Keratinocyte (primary cell): ENCODE measurements at regions of chr12 and their contacts with region 1.

Region 1: GRCh38 chr12:121472150-121472905 is 72.4 kb downstream of the RNF34 start:
- DNase-seq: no peak
- H3K4me3 ChIP-seq: no peak overlapping the region
- H3K27ac ChIP-seq: no peak overlapping the region
- H3K4me1 ChIP-seq: no peaks in the 10 kb centered on the region
- H3K27me3 ChIP-seq: no peaks in the 10 kb centered on the region
- CTCF ChIP-seq: no peak

Region 2: DNA sequence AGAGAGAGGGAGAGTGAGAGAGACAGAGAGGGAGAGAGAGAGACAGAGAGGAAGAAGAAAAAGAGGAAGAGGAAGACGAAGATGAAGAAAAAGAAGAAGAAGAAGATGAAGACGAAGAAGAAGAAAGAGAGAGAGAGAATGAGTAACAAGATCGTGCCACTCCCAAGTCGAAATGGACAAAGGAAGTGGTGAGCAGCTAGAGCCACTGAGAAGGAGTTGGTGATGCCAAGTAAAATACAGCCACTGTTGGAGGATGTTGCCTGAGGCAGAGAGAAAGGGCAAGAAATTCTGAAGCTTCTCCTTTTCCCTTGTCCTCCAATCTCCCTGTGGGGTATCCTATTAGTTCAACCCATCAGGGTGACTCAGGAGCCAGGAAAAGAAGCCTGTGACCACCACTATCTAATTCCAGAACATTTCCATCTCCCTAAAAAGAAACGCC is 107.6 kb before region 1 on chr12:
- dilution Hi-C with region 1: no loop called
- DNase-seq: no peak
- H3K4me3 ChIP-seq: no peak overlapping the region
- H3K27ac ChIP-seq: no peak overlapping the region
- H3K4me1 ChIP-seq: peaks cover 8% of the 10 kb centered on the region
- H3K27me3 ChIP-seq: no peaks in the 10 kb centered on the region
- CTCF ChIP-seq: no peak

Region 3: GRCh38 chr12:121438905-121439304 is 33.4 kb before region 1 on chr12:
- dilution Hi-C with region 1: loop called (anchors 5 kb)
- DNase-seq: no peak
- H3K4me3 ChIP-seq: no peak overlapping the region
- H3K27ac ChIP-seq: no peak overlapping the region
- H3K4me1 ChIP-seq: no peaks in the 10 kb centered on the region
- H3K27me3 ChIP-seq: no peaks in the 10 kb centered on the region
- CTCF ChIP-seq: no peak

Region 4: GRCh38 chr12:121522971-121523370 is 50.6 kb after region 1 on chr12:
- dilution Hi-C with region 1: loop called (anchors 5 kb)
- DNase-seq: no peak
- H3K4me3 ChIP-seq: no peak overlapping the region
- H3K27ac ChIP-seq: no peak overlapping the region
- H3K4me1 ChIP-seq: no peaks in the 10 kb centered on the region
- H3K27me3 ChIP-seq: no peaks in the 10 kb centered on the region
- CTCF ChIP-seq: no peak